Right cardiac atrium (tissue), 5 donors: ENCODE measurements at regions of chr11 and their contacts with region 1.

Region 1: DNA sequence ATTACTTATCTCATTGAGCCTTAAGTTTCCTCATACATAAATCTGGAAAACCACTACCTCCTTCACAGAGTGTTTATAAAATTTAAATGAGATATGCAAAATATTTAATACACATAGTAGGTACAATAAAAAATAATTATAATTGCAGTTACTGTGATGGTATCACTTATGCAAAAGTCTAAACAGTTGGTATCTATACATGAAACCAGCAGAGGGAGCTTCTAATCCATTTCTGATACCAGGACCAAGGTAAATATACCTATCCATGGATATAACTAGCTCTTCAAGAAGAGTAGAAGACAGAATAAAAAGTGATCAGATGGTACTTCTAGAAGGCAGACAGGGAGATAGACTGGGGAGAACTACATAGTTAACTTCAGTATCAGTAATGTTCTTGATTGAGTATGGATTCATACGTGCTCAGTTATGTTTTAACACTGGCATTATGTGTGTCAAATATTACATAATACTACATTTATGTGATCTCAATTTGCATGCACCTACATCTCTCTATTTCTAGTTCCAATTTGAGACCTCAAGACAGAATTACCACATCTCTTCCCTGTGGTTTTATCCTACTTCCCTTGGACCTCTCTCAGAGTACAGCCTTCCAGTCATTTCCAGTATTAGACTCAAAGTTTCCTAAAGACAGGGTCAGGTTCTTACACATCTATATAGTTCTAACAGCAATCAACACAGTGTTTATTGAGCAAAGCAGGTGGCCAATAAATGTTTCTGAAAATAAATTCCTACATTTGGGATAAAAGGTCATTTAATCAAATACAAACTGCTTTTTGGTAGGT is 13.7 kb upstream of the TSG101 start:
- DNase-seq: no peak
- ATAC-seq: no peak
- H3K4me3 ChIP-seq: no peak overlapping the region
- H3K27ac ChIP-seq: no peak overlapping the region
- H3K4me1 ChIP-seq: no peaks in the 10 kb centered on the region
- H3K27me3 ChIP-seq: no peaks in the 10 kb centered on the region

Region 2: DNA sequence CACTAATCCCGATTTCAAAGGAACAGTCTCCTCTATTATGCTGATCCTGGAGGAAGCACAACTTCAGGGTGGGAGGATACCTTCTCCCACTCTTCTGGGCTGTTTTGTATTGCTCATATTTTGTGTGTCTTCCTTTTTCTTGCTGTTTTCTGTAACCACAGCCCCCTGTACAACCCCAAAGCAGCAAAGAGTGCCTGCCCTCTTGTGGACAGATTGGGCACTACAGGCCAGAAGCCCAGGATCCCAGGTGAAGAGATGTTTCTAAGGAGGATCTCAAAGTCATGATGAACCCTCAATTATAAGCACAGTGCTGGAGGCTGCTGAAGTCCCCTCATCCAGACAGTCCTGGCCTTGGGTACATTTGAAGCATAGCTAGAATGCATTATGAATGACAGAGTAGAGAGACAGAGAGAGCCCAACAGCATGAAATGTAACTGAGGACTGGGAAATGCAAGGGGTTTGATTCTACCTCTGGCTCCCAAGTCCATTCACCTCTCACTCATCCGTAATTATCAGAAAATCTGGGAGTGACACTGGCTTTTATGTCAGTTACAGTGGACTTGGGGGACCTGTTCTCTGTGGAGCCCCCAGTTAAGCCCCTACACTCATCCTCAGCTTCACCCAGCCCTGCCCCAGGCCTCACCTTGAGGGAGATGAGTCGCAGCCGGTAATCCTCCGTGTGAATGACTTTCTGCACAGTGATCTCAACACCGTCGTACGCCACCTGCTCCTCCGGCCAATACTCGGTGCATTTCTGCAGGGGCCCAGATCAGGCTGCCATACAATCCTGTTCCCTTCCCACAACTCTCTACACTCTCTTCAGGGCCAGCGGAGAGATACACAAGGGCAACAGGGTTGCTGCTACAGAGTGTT is 191.8 kb after region 1 on chr11:
- intact Hi-C with region 1: loop called in 1 of 4 experiments (anchors 10 kb)
- DNase-seq: peak; percentile 34 to 81 (median 66)
- ATAC-seq: peak in 1 of 2 donors; percentile 56
- H3K4me3 ChIP-seq: no peak overlapping the region
- H3K27ac ChIP-seq: no peak overlapping the region
- H3K4me1 ChIP-seq: no peaks in the 10 kb centered on the region
- H3K27me3 ChIP-seq: no peaks in the 10 kb centered on the region